H1 (cell line): ENCODE measurements at regions of chr3 and their contacts with region 1.

Region 1: DNA sequence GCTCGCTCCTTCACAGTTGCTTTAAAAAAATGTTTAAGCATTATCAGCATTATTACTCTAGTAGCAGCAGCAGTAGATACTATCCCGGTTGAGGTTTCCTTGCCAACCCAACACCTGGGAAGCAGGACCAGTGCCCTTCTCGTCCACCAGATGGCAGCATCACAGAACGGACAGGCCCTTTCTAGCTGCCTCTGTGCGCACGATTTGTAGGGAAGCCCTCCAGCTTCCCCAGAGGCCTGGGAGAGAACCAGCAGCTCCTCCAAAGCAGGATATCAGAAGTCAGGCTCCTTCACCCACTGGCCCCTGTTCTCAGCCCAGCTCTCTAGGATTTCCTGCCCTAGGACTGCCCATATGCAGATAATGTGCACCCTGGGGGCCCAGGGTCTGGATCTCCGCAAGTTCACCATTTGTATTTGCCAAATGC is 16.8 kb upstream of the ESYT3 start:
- DNase-seq: peak; percentile 79 to 93
- H3K4me3 ChIP-seq: no peak overlapping the region
- H3K27ac ChIP-seq: no peak overlapping the region
- H3K4me1 ChIP-seq: peaks cover 0 to 3% (median 1%) of the 10 kb centered on the region in 4 experiments; a peak in 4 of 7 replicates
- H3K27me3 ChIP-seq: no peaks in the 10 kb centered on the region
- CTCF ChIP-seq: peak; percentile 97 to 99 (median 99)
- EP300 ChIP-seq: no peak
- POLR2A ChIP-seq: no peak
- RAD21 ChIP-seq: peak; percentile 88 to 90

Region 2: DNA sequence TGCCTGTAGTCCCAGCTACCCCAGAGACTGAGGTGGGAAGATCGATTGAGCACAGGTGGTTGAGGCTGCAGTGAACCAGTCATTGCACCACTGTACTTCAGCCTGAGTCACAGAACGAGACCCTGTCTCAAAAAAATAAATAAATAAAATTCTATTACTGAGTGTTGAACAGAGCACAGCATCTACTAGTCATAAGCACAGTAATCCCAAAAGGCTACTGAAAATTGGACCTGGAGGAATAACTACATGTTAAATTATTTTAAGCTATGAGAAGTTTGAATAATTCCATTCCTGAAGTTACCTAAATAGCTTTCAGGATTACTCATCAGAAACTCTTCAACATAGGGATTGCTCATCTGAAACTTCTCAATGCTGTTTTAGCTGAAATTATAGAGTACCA is 187.0 kb before region 1 on chr3:
- CTCF ChIA-PET with region 1: no interaction called
- POLR2A ChIA-PET with region 1: no interaction called
- DNase-seq: no peak
- H3K4me3 ChIP-seq: no peak overlapping the region
- H3K27ac ChIP-seq: no peak overlapping the region
- H3K4me1 ChIP-seq: no peaks in the 10 kb centered on the region
- H3K27me3 ChIP-seq: no peaks in the 10 kb centered on the region
- CTCF ChIP-seq: no peak
- EP300 ChIP-seq: no peak
- POLR2A ChIP-seq: no peak
- RAD21 ChIP-seq: no peak

Region 3: GRCh38 chr3:138338811-138339210 is 78.8 kb before region 1 on chr3:
- CTCF ChIA-PET with region 1: interaction called, 17 read pairs
- POLR2A ChIA-PET with region 1: no interaction called
- DNase-seq: no peak
- H3K4me3 ChIP-seq: no peak overlapping the region
- H3K27ac ChIP-seq: no peak overlapping the region
- H3K4me1 ChIP-seq: peaks cover 0 to 14% (median 3%) of the 10 kb centered on the region in 4 experiments; a peak in 4 of 7 replicates
- H3K27me3 ChIP-seq: no peaks in the 10 kb centered on the region
- CTCF ChIP-seq: no peak
- EP300 ChIP-seq: no peak
- POLR2A ChIP-seq: no peak
- RAD21 ChIP-seq: no peak

Region 4: DNA sequence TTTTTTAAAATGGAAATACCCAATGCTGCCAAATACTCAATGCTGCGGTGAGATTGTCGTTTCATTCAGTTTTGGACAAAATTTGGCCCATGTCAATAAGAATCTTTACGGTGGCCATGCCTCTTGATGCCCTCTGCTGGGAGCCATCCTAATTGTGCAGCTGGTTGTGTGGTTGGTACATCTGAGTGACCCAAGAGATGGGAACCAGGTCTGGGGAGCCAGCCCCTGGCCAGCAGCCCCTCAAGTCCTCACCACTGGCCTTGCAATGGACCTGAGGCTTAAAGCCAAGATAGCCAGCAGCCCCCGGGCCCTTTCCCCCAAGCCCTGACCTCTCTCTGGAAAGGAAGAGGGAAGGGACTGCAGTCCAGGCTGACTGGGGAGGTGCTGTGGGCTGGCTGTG is 19.6 kb before region 1 on chr3:
- CTCF ChIA-PET with region 1: interaction called, 25 read pairs
- POLR2A ChIA-PET with region 1: interaction called, 4 read pairs
- DNase-seq: no peak
- H3K4me3 ChIP-seq: no peak overlapping the region
- H3K27ac ChIP-seq: no peak overlapping the region
- H3K4me1 ChIP-seq: peaks cover 0 to 13% (median 7%) of the 10 kb centered on the region in 4 experiments; a peak in 6 of 7 replicates
- H3K27me3 ChIP-seq: no peaks in the 10 kb centered on the region
- CTCF ChIP-seq: no peak
- EP300 ChIP-seq: no peak
- POLR2A ChIP-seq: no peak
- RAD21 ChIP-seq: no peak

Region 5: DNA sequence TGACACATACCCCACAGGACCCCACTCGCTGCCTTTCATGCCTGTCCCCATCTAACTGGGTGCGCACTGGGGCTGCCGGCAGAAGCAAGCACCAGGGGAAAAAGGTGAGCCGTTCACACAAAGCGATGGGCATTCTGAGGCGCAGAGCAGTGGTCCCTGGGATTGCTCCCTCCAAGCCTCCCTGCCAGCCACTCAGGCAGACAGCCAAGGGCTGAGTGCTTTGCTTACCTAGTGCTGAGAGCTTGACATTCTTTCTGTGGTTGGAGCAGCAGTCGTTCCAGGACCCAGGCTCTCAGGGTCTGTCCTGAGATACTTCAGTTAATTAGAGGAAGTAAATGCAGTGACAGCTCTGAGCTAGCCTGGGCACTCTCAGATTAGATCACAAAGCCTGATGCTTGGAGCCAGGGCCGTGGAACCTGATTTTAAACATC is 22.6 kb after region 1 on chr3:
- CTCF ChIA-PET with region 1: interaction called, 31 read pairs
- POLR2A ChIA-PET with region 1: interaction called, 8 read pairs
- DNase-seq: no peak
- H3K4me3 ChIP-seq: no peak overlapping the region
- H3K27ac ChIP-seq: no peak overlapping the region
- H3K4me1 ChIP-seq: peaks cover 3 to 12% (median 5%) of the 10 kb centered on the region in 4 experiments
- H3K27me3 ChIP-seq: peaks cover under 1 to 19% (median 14%) of the 10 kb centered on the region in 4 experiments
- CTCF ChIP-seq: no peak
- EP300 ChIP-seq: no peak
- POLR2A ChIP-seq: no peak
- RAD21 ChIP-seq: no peak

Region 6: GRCh38 chr3:138615462-138615861 is 197.9 kb after region 1 on chr3:
- CTCF ChIA-PET with region 1: no interaction called
- POLR2A ChIA-PET with region 1: no interaction called
- DNase-seq: no peak
- H3K4me3 ChIP-seq: no peak overlapping the region
- H3K27ac ChIP-seq: no peak overlapping the region
- H3K4me1 ChIP-seq: peaks cover 0 to 3% (median 0%) of the 10 kb centered on the region in 4 experiments; a peak in 1 of 7 replicates
- H3K27me3 ChIP-seq: no peaks in the 10 kb centered on the region
- CTCF ChIP-seq: no peak
- EP300 ChIP-seq: no peak
- POLR2A ChIP-seq: no peak
- RAD21 ChIP-seq: no peak